ENCODE measurements at regions of chr3 and their contacts with region 1.

Region 1: DNA sequence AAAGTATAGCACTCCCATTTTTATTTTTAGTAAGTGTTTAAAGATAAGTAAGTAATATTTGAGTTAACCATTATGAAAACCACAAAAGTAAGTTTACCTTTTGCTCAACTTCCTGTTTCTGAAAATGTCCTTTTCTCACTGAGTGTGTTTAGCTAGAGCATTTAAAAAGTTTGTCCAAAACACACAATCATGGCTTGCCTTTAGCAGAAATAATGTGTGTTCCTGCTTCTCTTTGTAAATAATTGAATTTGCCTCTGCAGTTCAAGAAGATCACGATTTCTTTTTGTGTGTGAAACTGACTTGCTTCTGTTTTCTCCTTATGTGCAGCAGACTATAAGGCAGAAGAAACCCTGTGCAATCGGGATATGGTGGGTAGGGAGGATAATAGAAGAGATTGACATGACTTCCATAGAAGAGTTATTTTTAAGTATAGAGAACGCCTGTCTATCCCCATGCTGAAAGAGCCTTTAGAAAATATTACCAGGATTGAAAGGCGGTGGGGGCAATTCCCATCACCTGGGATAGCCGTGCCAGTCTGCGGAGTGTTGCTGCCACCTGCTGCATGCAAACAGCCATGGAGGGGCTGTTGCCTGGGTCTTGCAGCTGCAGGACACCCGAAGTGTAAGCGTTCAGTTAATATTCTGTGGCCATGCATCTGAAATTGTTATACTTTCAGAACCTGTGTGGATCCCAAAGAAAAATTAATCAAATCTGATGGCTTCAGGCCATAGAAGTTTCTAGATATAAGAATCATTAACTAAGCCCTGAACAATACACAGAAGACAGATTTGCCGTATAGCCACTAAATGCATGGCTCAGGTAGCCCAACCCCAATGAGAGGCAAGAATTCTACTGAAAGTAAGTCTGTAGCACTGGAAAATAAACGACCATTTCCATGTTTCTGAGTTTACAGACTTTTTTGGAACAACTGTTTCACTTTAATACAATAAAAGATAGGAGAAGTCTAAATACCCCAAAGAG is 2.4 kb upstream of the CD96 start:
- DNase-seq: peak; percentile 89
- H3K4me3 Mint-ChIP-seq: peak overlapping the region; percentile 79
- H3K27ac Mint-ChIP-seq: peak overlapping the region; percentile 89
- H3K4me1 Mint-ChIP-seq: peaks cover 74% of the 10 kb centered on the region
- H3K27me3 Mint-ChIP-seq: no peaks in the 10 kb centered on the region

Region 2: GRCh38 chr3:109731620-109732473 is 1807.8 kb before region 1 on chr3:
- intact Hi-C with region 1: loop called (anchors 1 kb)
- DNase-seq: peak; percentile 86
- H3K4me3 Mint-ChIP-seq: no peak overlapping the region
- H3K27ac Mint-ChIP-seq: no peak overlapping the region
- H3K4me1 Mint-ChIP-seq: no peaks in the 10 kb centered on the region
- H3K27me3 Mint-ChIP-seq: no peaks in the 10 kb centered on the region

Region 3: GRCh38 chr3:111071257-111072015 is 468.2 kb before region 1 on chr3 and contains the start of gene NECTIN3:
- intact Hi-C with region 1: loop called (anchors 1 kb)
- DNase-seq: peak; percentile 94
- H3K4me3 Mint-ChIP-seq: peak within 1 kb of the TSS; percentile 94
- H3K27ac Mint-ChIP-seq: peak within 1 kb of the TSS; percentile 87
- H3K4me1 Mint-ChIP-seq: peaks cover 30% of the 10 kb centered on the region
- H3K27me3 Mint-ChIP-seq: peaks cover 55% of the 10 kb centered on the region
- total RNA-seq, gene NECTIN3: 3.0 and 4.4 TPM in 2 replicates

Region 4: DNA sequence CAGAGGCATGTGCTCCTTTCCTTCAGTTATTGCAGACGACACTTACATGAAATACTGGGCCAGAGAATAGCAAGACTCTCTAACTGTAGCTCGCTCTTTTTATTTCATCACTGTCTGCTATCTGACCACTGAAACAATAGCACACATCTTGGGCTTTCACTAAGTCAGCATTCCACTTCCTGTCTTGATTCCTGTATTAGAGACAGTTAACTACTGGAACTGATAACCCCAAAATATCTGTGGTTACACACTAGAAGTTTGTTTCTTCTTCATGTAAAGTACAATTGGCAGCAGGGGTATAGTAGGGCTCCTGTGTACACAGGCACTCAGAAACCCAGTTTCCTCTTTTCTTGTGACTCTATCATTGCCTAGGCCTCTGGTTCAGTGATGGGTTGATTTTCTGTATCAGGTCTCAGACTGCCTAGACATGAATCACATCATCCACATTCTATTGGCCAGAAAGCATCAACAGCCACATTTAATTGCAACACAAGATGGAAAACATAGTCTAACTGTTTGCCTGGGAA is 227.9 kb before region 1 on chr3:
- intact Hi-C with region 1: loop called (anchors 5 kb)
- DNase-seq: peak; percentile 75
- H3K4me3 Mint-ChIP-seq: peak overlapping the region; percentile 40
- H3K27ac Mint-ChIP-seq: peak overlapping the region; percentile 86
- H3K4me1 Mint-ChIP-seq: peaks cover 45% of the 10 kb centered on the region
- H3K27me3 Mint-ChIP-seq: no peaks in the 10 kb centered on the region

Region 5: DNA sequence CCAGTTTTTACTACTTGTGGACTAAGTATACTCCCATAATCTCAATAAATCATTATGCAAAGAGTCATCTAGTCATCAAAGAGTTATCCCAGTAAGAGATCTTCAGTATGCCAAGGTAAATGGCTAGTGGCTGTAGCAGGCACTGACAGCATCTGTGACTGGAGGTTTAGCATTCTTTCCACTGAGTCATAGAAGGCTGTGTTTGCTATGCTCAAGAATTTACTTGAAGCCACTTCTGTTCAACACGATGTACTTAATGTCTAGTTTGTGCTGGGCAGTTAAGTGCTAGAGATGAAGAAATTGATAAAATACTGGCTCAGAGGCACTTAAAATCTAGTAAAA is 42.4 kb after region 1 on chr3:
- intact Hi-C with region 1: no loop called
- DNase-seq: no peak
- H3K4me3 Mint-ChIP-seq: peak overlapping the region; percentile 15
- H3K27ac Mint-ChIP-seq: peak overlapping the region; percentile 86
- H3K4me1 Mint-ChIP-seq: peaks cover 77% of the 10 kb centered on the region
- H3K27me3 Mint-ChIP-seq: no peaks in the 10 kb centered on the region

Region 6: DNA sequence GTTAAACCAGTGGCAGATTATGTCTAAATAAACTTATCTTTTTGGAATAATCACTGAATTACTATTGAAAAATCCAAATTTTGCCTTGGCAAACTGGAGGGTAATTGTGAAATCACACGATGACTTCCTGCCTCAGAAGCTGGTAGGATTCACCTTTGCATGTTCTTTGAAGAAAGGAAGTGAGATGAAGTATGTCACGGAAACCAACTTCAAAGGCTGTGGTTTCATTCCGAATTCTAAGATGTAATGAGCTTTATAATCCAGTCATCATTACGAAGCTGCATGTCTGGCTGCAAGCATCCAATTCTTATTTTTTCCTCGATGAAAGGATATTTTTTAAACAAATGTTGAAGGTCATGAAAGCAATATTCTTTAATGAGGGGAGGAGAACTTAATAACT is 70.5 kb after region 1 on chr3:
- intact Hi-C with region 1: loop called (anchors 1 kb)
- DNase-seq: peak; percentile 90
- H3K4me3 Mint-ChIP-seq: peak overlapping the region; percentile 75
- H3K27ac Mint-ChIP-seq: peak overlapping the region; percentile 92
- H3K4me1 Mint-ChIP-seq: peaks cover 87% of the 10 kb centered on the region
- H3K27me3 Mint-ChIP-seq: no peaks in the 10 kb centered on the region

Region 7: GRCh38 chr3:111700054-111700453 is 160.4 kb after region 1 on chr3:
- intact Hi-C with region 1: loop called (anchors 1 kb)
- DNase-seq: peak; percentile 69
- H3K4me3 Mint-ChIP-seq: peak overlapping the region; percentile 71
- H3K27ac Mint-ChIP-seq: peak overlapping the region; percentile 81
- H3K4me1 Mint-ChIP-seq: peaks cover 42% of the 10 kb centered on the region
- H3K27me3 Mint-ChIP-seq: no peaks in the 10 kb centered on the region